Cardiac septum (tissue), 1 donor: ENCODE measurements at regions of chr20 and their contacts with region 1.

Region 1: GRCh38 chr20:53578492-53579222 is 15.0 kb downstream of the ZNF217 start:
- DNase-seq: no peak

Region 2: GRCh38 chr20:53623454-53624211 is 45.0 kb after region 1 on chr20:
- intact Hi-C with region 1: loop called (anchors 5 kb)
- DNase-seq: peak; percentile 83

Region 3: GRCh38 chr20:53643031-53643832 is 64.6 kb after region 1 on chr20:
- intact Hi-C with region 1: no loop called
- DNase-seq: peak; percentile 79

Region 4: DNA sequence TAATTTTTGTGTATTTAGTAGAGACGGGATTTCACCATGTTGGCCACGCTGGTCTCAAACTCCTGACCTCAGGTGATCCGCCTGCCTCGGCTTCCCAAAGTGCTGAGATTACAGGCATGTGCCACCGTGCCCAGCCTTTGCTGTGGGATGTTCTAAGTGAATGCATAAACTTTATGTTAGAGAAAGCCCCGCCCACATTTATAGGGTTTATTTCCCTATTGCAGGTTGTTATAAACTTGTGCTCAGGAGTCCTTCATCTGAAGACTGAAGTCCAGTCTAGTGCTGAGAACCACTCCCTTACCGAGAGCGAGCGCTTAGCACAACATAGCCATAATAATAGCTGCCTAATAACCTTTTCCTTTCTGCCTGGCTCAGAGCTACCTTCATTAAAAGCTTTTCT is 90.3 kb after region 1 on chr20:
- intact Hi-C with region 1: no loop called
- DNase-seq: no peak

Region 5: GRCh38 chr20:53828682-53829254 is 250.1 kb after region 1 on chr20:
- intact Hi-C with region 1: loop called (anchors 5 kb)
- DNase-seq: no peak

Region 6: DNA sequence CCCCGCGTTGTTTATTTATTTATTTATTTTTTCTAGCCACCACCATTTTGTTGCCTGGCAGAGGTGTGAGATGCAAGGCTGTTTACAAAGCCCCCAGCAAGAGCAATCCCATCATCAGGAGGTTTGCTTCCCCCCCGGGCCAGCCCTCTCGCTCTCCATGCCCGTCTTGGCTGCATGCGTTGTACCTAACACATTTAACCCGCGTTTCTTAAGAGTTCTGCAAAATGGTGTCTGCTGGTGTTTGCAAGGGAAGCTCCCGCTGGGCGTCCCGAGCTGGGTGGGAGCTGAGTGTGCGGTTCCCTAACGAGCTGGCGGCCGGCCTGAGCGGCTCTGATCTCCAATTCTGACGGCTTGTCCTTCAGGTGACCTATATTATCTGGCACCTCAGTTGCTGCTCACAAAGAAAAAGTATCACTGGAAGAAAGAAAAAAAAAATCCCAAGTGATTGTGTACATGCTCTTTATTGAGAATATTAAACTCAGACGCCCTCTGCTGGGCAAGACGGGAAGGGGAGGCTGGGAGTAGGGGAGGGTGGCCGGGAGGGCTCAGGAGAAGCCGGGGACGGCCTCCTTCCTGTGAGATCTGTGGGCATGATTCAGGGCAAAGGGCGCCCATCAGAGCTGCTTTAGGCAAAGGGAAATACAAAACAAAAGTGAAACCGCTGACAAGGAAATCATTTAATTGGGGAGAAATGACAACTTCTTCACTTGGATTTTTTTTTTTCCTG is 337.0 kb after region 1 on chr20:
- intact Hi-C with region 1: loop called (anchors 1 kb)
- DNase-seq: peak; percentile 97

Region 7: DNA sequence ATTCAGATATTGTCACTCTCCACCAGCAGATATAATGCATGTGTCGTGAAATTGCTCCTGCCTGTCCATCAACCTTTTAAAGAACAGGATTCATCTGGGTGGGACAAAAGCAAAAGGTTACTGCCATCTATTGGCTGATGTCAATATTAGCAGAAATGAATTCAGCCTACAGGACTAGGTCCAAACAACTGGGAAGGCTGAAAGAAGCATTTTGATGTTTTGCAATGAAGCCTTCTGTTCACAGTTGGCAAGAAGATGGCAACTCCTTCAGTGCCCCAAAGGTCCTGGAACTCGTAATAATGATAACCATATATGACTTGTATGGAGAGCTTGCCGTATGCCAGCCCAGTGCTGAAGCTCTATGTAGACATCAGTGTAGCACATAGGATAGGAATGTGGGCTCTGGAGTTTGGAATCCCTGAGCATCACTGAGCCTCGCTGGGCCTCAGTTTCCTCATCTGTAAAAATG is 484.2 kb after region 1 on chr20:
- intact Hi-C with region 1: loop called (anchors 5 kb)
- DNase-seq: no peak